Prostate gland (tissue), 2 donors: ENCODE measurements at regions of chr2 and their contacts with region 1.

Region 1: DNA sequence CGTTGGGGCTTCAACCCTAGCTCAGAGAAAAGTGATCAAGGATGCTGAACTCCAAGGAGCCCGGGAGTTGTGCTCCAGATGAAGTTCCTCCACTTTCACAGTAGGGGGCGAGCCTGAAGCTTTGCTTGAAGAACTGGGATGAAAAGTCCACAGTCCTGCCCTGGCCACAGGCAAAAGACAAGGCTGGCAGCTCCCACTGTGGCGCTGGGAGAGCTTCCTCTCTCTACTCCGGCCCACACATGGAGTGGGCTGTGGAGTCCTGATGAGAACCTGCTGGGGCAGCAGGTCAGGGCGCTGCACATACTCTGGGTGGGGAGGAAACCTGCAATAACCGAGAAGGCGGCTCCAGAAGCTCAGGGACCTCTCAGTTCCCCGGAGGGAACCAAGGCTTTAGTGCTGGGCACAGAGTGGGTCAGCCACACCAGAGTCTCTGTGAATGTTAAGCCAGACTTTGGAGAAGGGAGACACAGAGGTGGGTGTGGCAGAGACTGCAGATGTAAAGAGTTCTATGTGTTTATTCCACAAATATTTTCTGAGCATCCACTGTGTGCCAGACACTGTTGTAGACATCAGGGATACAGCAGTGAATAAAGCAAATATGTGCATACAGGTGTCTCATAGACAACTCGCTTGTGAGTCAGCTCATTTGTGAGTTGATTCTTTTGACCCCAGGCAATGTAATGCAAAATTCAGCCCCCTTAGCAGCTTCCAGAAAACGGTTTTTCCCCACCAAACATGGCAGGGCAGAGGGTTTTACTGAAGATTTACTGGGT is 48.0 kb upstream of the MRPL33 start:
- DNase-seq: peak; percentile 73
- H3K4me3 ChIP-seq: no peak overlapping the region
- H3K27ac ChIP-seq: peak overlapping the region; percentile 70 to 72
- H3K4me1 ChIP-seq: no peaks in the 10 kb centered on the region
- H3K27me3 ChIP-seq: no peaks in the 10 kb centered on the region
- CTCF ChIP-seq: peak; percentile 55 to 91 (median 74)
- POLR2A ChIP-seq: no peak

Region 2: GRCh38 chr2:27771548-27772335 is 48.2 kb after region 1 on chr2 and contains the start of gene MRPL33:
- intact Hi-C with region 1: loop called (anchors 5 kb)
- DNase-seq: peak; percentile 92
- H3K4me3 ChIP-seq: peak within 1 kb of the TSS; percentile 62 to 79
- H3K27ac ChIP-seq: peak within 1 kb of the TSS; percentile 79 to 90
- H3K4me1 ChIP-seq: peaks cover 9% of the 10 kb centered on the region
- H3K27me3 ChIP-seq: no peaks in the 10 kb centered on the region
- CTCF ChIP-seq: peak in 1 of 4 experiments; percentile 2
- POLR2A ChIP-seq: peak; percentile 57
- total RNA-seq, gene MRPL33: 140 to 186 TPM